CD14-positive monocyte (primary cell): ENCODE measurements at regions of chr17 and their contacts with region 1.

Region 1: GRCh38 chr17:73429440-73430164 is 117.8 kb upstream of the CDC42EP4 start:
- DNase-seq: peak; percentile 65 to 81 (median 75)
- H3K4me3 ChIP-seq: no peak overlapping the region
- H3K4me3 Mint-ChIP-seq: no peak overlapping the region
- H3K27ac ChIP-seq: no peak overlapping the region
- H3K27ac Mint-ChIP-seq: peak overlapping the region in 1 of 7 donors; percentile 18
- H3K4me1 ChIP-seq: peaks cover 11 to 20% of the 10 kb centered on the region in 2 donors
- H3K4me1 Mint-ChIP-seq: peaks cover 20% of the 10 kb centered on the region
- H3K27me3 ChIP-seq: no peaks in the 10 kb centered on the region
- H3K27me3 Mint-ChIP-seq: peaks cover 3 to 6% (median 3%) of the 10 kb centered on the region in 3 donors
- CTCF ChIP-seq: peak; percentile 96

Region 2: DNA sequence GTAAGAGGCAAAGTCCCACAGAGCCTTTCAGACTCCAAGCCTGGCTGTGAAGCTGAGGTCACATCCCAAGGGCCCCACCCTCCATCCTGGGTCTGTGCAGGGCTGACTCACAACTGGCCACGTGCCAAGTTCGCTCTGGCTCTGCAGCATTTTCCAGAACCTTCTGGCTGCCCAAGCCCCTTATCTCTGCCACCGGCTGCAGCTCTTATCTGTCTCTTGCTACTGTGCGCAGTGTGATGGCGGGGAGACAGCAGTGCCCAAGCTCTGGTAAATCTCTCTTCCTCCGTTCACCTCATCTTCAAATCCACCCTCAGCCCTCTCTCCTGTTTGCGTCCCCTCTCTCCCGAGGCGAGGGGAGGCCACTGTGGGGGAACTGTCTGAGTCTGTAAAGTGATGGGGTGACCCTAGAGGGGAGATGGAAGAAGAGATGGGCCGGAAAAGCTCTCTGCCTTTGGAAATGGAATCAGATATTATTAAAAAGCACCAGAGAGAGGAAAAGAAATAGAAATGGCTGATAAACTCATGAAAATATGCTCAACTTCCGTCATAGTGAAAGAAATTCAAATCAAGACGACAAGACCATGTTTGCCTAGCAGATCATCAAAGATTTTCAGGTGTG is 44.9 kb after region 1 on chr17:
- intact Hi-C with region 1: no loop called
- DNase-seq: peak in 2 of 3 donors; percentile 8 to 46
- H3K4me3 ChIP-seq: no peak overlapping the region
- H3K4me3 Mint-ChIP-seq: no peak overlapping the region
- H3K27ac ChIP-seq: no peak overlapping the region
- H3K27ac Mint-ChIP-seq: peak overlapping the region in 1 of 7 donors; percentile 20
- H3K4me1 ChIP-seq: no peaks in the 10 kb centered on the region
- H3K4me1 Mint-ChIP-seq: peaks cover 5% of the 10 kb centered on the region
- H3K27me3 ChIP-seq: no peaks in the 10 kb centered on the region
- H3K27me3 Mint-ChIP-seq: peaks cover 2 to 9% (median 4%) of the 10 kb centered on the region in 3 donors
- CTCF ChIP-seq: no peak

Region 3: GRCh38 chr17:73710095-73710592 is 280.5 kb after region 1 on chr17:
- intact Hi-C with region 1: loop called (anchors 2 to 5 kb)
- DNase-seq: peak; percentile 49 to 66 (median 66)
- H3K4me3 ChIP-seq: no peak overlapping the region
- H3K4me3 Mint-ChIP-seq: peak overlapping the region in 1 of 2 donors; percentile 61
- H3K27ac ChIP-seq: no peak overlapping the region
- H3K27ac Mint-ChIP-seq: no peak overlapping the region
- H3K4me1 ChIP-seq: peaks cover 17 to 19% of the 10 kb centered on the region in 2 donors
- H3K4me1 Mint-ChIP-seq: peaks cover 18% of the 10 kb centered on the region
- H3K27me3 ChIP-seq: peaks cover 0 to 2% of the 10 kb centered on the region in 2 donors
- H3K27me3 Mint-ChIP-seq: peaks cover 0 to 18% (median 6%) of the 10 kb centered on the region in 3 donors
- CTCF ChIP-seq: peak; percentile 91

Region 4: GRCh38 chr17:73956669-73957465 is 527.3 kb after region 1 on chr17:
- intact Hi-C with region 1: loop called in 1 of 2 experiments (anchors 5 kb)
- DNase-seq: peak in 2 of 3 donors; percentile 22 to 32
- H3K4me3 ChIP-seq: no peak overlapping the region
- H3K4me3 Mint-ChIP-seq: no peak overlapping the region
- H3K27ac ChIP-seq: no peak overlapping the region
- H3K27ac Mint-ChIP-seq: no peak overlapping the region
- H3K4me1 ChIP-seq: peaks cover 14 to 15% of the 10 kb centered on the region in 2 donors
- H3K4me1 Mint-ChIP-seq: peaks cover 10% of the 10 kb centered on the region
- H3K27me3 ChIP-seq: peaks cover 0 to 13% of the 10 kb centered on the region in 2 donors
- H3K27me3 Mint-ChIP-seq: peaks cover 3 to 11% (median 8%) of the 10 kb centered on the region in 3 donors
- CTCF ChIP-seq: peak; percentile 58

Region 5: DNA sequence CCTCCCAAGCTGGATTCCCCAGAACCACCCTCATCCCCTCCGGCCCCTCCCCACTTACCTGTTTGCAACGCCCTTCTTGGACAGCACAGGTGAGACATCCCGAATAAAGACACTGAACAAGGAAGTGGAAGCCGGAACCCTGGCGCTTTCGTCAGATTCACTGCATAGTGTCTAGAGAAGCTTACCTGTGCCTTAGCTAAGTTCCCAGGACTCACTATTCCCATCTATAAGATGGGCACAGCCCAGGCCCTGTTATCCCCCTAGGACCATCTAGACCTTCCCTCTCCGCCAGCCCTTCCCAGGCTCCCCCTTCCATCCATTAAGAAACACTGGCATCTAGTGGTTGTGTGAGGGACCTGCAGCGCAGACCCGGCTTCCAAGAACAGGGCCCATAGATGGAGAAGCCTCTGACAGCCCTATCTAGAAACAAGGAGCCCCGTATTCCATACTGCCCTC is 747.0 kb after region 1 on chr17:
- intact Hi-C with region 1: loop called (anchors 2 kb)
- DNase-seq: peak; percentile 9 to 35 (median 17)
- H3K4me3 ChIP-seq: no peak overlapping the region
- H3K4me3 Mint-ChIP-seq: peak overlapping the region in 1 of 2 donors; percentile 12
- H3K27ac ChIP-seq: no peak overlapping the region
- H3K27ac Mint-ChIP-seq: peak overlapping the region in 1 of 7 donors; percentile 41
- H3K4me1 ChIP-seq: no peaks in the 10 kb centered on the region
- H3K4me1 Mint-ChIP-seq: no peaks in the 10 kb centered on the region
- H3K27me3 ChIP-seq: no peaks in the 10 kb centered on the region
- H3K27me3 Mint-ChIP-seq: peaks cover 3 to 17% (median 10%) of the 10 kb centered on the region in 3 donors
- CTCF ChIP-seq: peak; percentile 69